Psoas muscle (tissue), 8 donors: ENCODE measurements at regions of chr18 and their contacts with region 1.

Region 1: GRCh38 chr18:12038639-12039417 is 54.8 kb upstream of the ANKRD62 start:
- DNase-seq: peak; percentile 82 to 91
- ATAC-seq: peak; percentile 91 to 96 (median 94)
- H3K4me3 ChIP-seq: peak overlapping the region; percentile 69
- H3K27ac ChIP-seq: peak overlapping the region; percentile 31
- H3K4me1 ChIP-seq: peaks cover 6% of the 10 kb centered on the region
- H3K27me3 ChIP-seq: no peaks in the 10 kb centered on the region
- CTCF ChIP-seq: peak; percentile 99

Region 2: GRCh38 chr18:11654736-11655605 is 383.9 kb before region 1 on chr18:
- intact Hi-C with region 1: loop called in 1 of 2 experiments (anchors 5 kb)
- DNase-seq: peak; percentile 49 to 67
- ATAC-seq: peak; percentile 63 to 81 (median 68)
- H3K4me3 ChIP-seq: no peak overlapping the region
- H3K27ac ChIP-seq: no peak overlapping the region
- H3K4me1 ChIP-seq: no peaks in the 10 kb centered on the region
- H3K27me3 ChIP-seq: peaks cover 0 to 19% (median 3%) of the 10 kb centered on the region in 3 donors
- CTCF ChIP-seq: peak; percentile 71

Region 3: DNA sequence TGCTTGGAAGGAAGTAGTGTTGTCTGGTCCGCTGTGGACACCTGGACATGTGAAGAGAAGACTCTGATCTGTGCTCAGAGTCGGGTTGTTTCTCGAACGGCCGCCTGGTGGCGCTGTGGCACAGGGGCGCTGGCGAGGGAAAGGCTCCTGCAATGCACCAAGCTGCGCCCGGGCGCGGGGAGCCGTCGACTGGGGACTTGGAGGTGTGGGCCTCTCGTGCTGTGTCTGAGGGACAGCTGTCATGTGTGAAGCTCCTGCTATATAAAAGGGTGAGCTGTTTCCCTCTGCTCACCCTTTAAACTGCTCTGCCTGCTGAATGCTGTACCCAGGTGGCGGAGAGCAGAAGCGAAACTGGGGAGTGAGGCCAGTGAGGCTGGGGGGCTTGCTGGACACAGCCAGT is 305.8 kb before region 1 on chr18:
- intact Hi-C with region 1: loop called (anchors 1 to 10 kb)
- DNase-seq: peak; percentile 82 to 90
- ATAC-seq: peak; percentile 96 to 99 (median 98)
- H3K4me3 ChIP-seq: peak overlapping the region; percentile 55
- H3K27ac ChIP-seq: no peak overlapping the region
- H3K4me1 ChIP-seq: no peaks in the 10 kb centered on the region
- H3K27me3 ChIP-seq: no peaks in the 10 kb centered on the region
- CTCF ChIP-seq: peak; percentile 93

Region 4: GRCh38 chr18:11937874-11938478 is 100.9 kb before region 1 on chr18:
- intact Hi-C with region 1: loop called (anchors 2 kb)
- DNase-seq: peak; percentile 74 to 84
- ATAC-seq: peak; percentile 69 to 92 (median 82)
- H3K4me3 ChIP-seq: no peak overlapping the region
- H3K27ac ChIP-seq: no peak overlapping the region
- H3K4me1 ChIP-seq: no peaks in the 10 kb centered on the region
- H3K27me3 ChIP-seq: no peaks in the 10 kb centered on the region
- CTCF ChIP-seq: peak; percentile 92